Activated CD4-positive, alpha-beta memory T cell treated with anti-CD3 and anti-CD28 coated beads for 36 hours (primary cell): ENCODE measurements at regions of chr12 and their contacts with region 1.

Region 1: GRCh38 chr12:39443081-39443928 is at the start of gene KIF21A:
- DNase-seq: peak; percentile 93
- H3K4me3 Mint-ChIP-seq: peak within 1 kb of the TSS; percentile 98
- H3K27ac Mint-ChIP-seq: peak within 1 kb of the TSS; percentile 88
- H3K4me1 Mint-ChIP-seq: peaks cover 24% of the 10 kb centered on the region
- H3K27me3 Mint-ChIP-seq: no peaks in the 10 kb centered on the region
- total RNA-seq, gene KIF21A: 28.5 to 30.5 TPM

Region 2: GRCh38 chr12:39319187-39319586 is 124.1 kb before region 1 on chr12:
- CTCF ChIA-PET with region 1: interaction called, 6 read pairs
- POLR2A ChIA-PET with region 1: no interaction called
- intact Hi-C with region 1: loop called (anchors 10 kb)
- DNase-seq: no peak
- H3K4me3 Mint-ChIP-seq: no peak overlapping the region
- H3K27ac Mint-ChIP-seq: no peak overlapping the region
- H3K4me1 Mint-ChIP-seq: no peaks in the 10 kb centered on the region
- H3K27me3 Mint-ChIP-seq: no peaks in the 10 kb centered on the region

Region 3: DNA sequence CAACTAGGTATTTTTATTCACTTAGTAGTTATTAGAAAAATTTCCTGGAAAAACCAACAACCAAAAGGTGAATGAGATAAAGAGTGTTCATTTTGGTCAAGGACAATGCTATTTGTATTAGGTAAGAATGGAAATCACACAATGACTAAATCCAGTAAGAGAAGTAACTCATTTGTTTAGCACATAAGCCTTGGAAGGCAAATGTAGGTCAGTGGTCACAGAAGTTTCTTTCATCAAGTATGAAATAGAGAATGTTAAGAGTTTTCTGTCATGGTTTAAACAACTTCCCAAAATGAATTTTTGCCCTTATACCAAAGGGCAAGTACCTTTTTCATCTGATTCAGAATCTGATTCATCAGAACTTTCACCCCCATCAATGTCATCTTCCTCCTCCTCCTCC is 102.1 kb before region 1 on chr12:
- CTCF ChIA-PET with region 1: no interaction called
- POLR2A ChIA-PET with region 1: no interaction called
- intact Hi-C with region 1: loop called (anchors 1 kb)
- DNase-seq: no peak
- H3K4me3 Mint-ChIP-seq: no peak overlapping the region
- H3K27ac Mint-ChIP-seq: peak overlapping the region; percentile 23
- H3K4me1 Mint-ChIP-seq: peaks cover 16% of the 10 kb centered on the region
- H3K27me3 Mint-ChIP-seq: no peaks in the 10 kb centered on the region

Region 4: GRCh38 chr12:39372929-39373328 is 70.4 kb before region 1 on chr12:
- CTCF ChIA-PET with region 1: no interaction called
- POLR2A ChIA-PET with region 1: interaction called, 3 read pairs
- intact Hi-C with region 1: loop called (anchors 2 kb)
- DNase-seq: peak; percentile 16
- H3K4me3 Mint-ChIP-seq: no peak overlapping the region
- H3K27ac Mint-ChIP-seq: peak overlapping the region; percentile 52
- H3K4me1 Mint-ChIP-seq: peaks cover 16% of the 10 kb centered on the region
- H3K27me3 Mint-ChIP-seq: no peaks in the 10 kb centered on the region

Region 5: DNA sequence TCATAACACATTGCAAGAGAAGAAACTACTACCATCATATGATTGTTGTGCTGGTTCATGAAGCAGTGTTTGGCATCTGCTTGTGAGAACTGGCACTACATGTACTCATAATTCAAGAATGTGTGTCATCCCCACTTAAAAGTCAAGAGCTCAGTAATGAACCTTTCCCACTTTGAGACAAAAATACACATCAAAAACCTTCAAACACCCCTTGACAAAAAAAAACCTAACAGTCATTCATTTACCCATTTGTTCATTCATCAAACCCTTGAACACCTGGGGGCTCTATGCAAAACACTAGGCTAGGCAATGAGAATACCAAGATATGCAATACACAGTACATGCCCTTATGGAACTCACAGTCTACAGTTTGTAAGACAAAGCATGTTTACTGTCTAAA is 40.4 kb before region 1 on chr12:
- CTCF ChIA-PET with region 1: no interaction called
- POLR2A ChIA-PET with region 1: no interaction called
- intact Hi-C with region 1: loop called (anchors 2 kb)
- DNase-seq: no peak
- H3K4me3 Mint-ChIP-seq: no peak overlapping the region
- H3K27ac Mint-ChIP-seq: no peak overlapping the region
- H3K4me1 Mint-ChIP-seq: peaks cover 25% of the 10 kb centered on the region
- H3K27me3 Mint-ChIP-seq: no peaks in the 10 kb centered on the region

Region 6: GRCh38 chr12:39467432-39467870 is 24.1 kb after region 1 on chr12:
- CTCF ChIA-PET with region 1: no interaction called
- POLR2A ChIA-PET with region 1: interaction called, 3 read pairs
- intact Hi-C with region 1: loop called (anchors 1 kb)
- DNase-seq: peak; percentile 13
- H3K4me3 Mint-ChIP-seq: no peak overlapping the region
- H3K27ac Mint-ChIP-seq: peak overlapping the region; percentile 39
- H3K4me1 Mint-ChIP-seq: peaks cover 16% of the 10 kb centered on the region
- H3K27me3 Mint-ChIP-seq: peaks cover 2% of the 10 kb centered on the region

Region 7: GRCh38 chr12:39483042-39483441 is 39.7 kb after region 1 on chr12:
- CTCF ChIA-PET with region 1: no interaction called
- POLR2A ChIA-PET with region 1: no interaction called
- intact Hi-C with region 1: no loop called
- DNase-seq: no peak
- H3K4me3 Mint-ChIP-seq: no peak overlapping the region
- H3K27ac Mint-ChIP-seq: no peak overlapping the region
- H3K4me1 Mint-ChIP-seq: no peaks in the 10 kb centered on the region
- H3K27me3 Mint-ChIP-seq: no peaks in the 10 kb centered on the region

Region 8: GRCh38 chr12:39646963-39647362 is 203.7 kb after region 1 on chr12:
- CTCF ChIA-PET with region 1: no interaction called
- POLR2A ChIA-PET with region 1: no interaction called
- intact Hi-C with region 1: no loop called
- DNase-seq: no peak
- H3K4me3 Mint-ChIP-seq: no peak overlapping the region
- H3K27ac Mint-ChIP-seq: no peak overlapping the region
- H3K4me1 Mint-ChIP-seq: peaks cover 13% of the 10 kb centered on the region
- H3K27me3 Mint-ChIP-seq: no peaks in the 10 kb centered on the region

Region 9: DNA sequence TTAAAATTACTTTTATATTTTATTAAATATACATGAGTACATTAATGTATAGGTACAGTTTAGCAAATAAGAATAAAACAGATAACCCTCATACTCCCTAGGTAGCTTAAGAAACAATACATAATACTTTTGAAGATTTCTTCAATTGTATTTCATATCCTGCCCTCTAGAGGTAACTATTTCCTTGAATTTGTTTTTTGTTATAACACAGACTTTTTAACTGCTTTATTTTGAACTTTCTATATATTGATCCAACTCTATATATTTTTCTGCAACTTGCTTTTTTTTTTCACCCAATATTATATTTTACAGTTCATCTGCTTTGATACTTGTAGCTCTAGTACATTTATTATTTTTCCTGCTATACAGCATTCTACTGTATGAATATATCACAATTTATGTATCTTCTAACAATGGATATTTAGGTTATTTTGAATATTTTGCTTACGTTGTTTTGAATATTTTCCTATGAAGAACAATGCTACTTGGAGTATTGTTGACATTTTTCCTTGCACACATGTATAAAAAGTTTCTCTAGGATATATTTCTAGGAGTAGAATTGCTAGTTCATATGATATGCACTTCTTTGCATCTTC is 249.1 kb after region 1 on chr12:
- CTCF ChIA-PET with region 1: interaction called, 3 read pairs
- POLR2A ChIA-PET with region 1: no interaction called
- intact Hi-C with region 1: loop called (anchors 5 kb)
- DNase-seq: no peak
- H3K4me3 Mint-ChIP-seq: no peak overlapping the region
- H3K27ac Mint-ChIP-seq: no peak overlapping the region
- H3K4me1 Mint-ChIP-seq: peaks cover under 1% of the 10 kb centered on the region
- H3K27me3 Mint-ChIP-seq: no peaks in the 10 kb centered on the region